ENCODE measurements at regions of chr17 and their contacts with region 1.

Region 1: DNA sequence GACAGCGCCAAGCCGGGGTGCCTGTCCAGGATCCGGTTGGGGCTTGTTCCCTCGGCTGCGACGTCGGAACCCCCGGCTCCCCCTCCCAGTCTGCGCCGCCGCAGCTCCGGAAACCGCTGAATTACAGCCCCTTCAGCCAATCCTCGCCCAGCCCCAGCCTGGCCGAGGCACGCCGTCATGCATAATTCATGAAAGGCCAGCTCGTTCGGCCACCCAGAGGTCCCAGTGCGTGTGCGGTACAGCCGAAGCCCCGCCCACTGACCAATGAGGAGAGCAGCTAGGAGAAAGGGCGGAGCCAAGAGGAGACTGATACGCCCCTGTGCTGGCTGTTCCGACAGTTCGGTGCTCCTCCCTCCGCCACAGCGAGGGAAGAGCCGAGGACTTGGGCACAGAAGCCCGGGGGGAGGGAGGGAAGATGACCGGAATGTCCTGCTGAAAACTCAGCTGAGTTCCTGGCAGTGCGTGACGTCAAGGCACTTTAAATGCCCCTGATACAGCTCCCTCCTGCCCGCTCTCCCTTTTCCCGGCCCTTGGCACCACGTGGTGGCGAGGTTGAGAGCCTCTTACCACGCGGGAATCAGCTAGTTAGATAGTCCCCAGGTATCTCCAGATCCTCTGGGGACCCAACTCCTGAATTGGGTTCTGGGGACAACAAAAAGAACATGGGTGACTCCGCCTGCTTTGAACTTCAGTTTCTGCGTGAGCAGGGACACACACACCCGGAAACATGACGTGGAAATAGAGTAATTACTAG is at the start of gene STAT3:
- DNase-seq: peak; percentile 99 to 100 (median 100)
- ATAC-seq: peak; percentile 86
- H3K4me3 ChIP-seq: peak within 1 kb of the TSS; percentile 61 to 86
- H3K4me3 Mint-ChIP-seq: peak within 1 kb of the TSS; percentile 99
- H3K27ac ChIP-seq: peak within 1 kb of the TSS; percentile 99
- H3K27ac Mint-ChIP-seq: peak within 1 kb of the TSS; percentile 100
- H3K4me1 ChIP-seq: peaks cover 29% of the 10 kb centered on the region
- H3K4me1 Mint-ChIP-seq: peaks cover 47% of the 10 kb centered on the region
- H3K27me3 ChIP-seq: no peaks in the 10 kb centered on the region
- H3K27me3 Mint-ChIP-seq: no peaks in the 10 kb centered on the region
- CTCF ChIP-seq: no peak
- total RNA-seq, gene STAT3: 338 to 343 TPM

Region 2: GRCh38 chr17:42019509-42020404 is 368.8 kb before region 1 on chr17 and contains the start of gene NKIRAS2:
- CTCF ChIA-PET with region 1: no interaction called
- POLR2A ChIA-PET with region 1: interaction called, 11 read pairs
- intact Hi-C with region 1: loop called in 1 of 2 experiments (anchors 5 kb)
- DNase-seq: peak; percentile 82 to 94 (median 94)
- ATAC-seq: peak; percentile 80
- H3K4me3 ChIP-seq: peak within 1 kb of the TSS; percentile 69 to 83
- H3K4me3 Mint-ChIP-seq: peak within 1 kb of the TSS; percentile 97
- H3K27ac ChIP-seq: peak within 1 kb of the TSS; percentile 34 to 76
- H3K27ac Mint-ChIP-seq: peak within 1 kb of the TSS; percentile 87
- H3K4me1 ChIP-seq: peaks cover 48% of the 10 kb centered on the region
- H3K4me1 Mint-ChIP-seq: peaks cover 62% of the 10 kb centered on the region
- H3K27me3 ChIP-seq: no peaks in the 10 kb centered on the region
- H3K27me3 Mint-ChIP-seq: no peaks in the 10 kb centered on the region
- CTCF ChIP-seq: peak; percentile 91
- total RNA-seq, gene NKIRAS2: 13.2 to 14.8 TPM

Region 3: DNA sequence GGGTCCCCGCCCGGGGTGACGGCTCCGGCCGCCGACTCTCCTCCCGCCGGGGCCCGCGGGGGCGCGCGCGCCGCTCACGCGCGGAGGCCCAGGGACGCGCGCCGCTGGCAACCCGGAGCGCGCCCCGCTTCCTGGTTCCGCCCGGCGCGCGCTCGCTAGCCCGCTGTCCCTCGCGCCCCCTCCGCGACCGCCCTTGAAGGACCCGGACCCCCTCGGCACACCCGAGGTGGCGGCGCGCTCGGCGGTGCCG is 112.3 kb before region 1 on chr17 and contains the start of gene STAT5B:
- CTCF ChIA-PET with region 1: no interaction called
- POLR2A ChIA-PET with region 1: interaction called, 6 read pairs
- intact Hi-C with region 1: loop called in 1 of 2 experiments (anchors 1 kb)
- DNase-seq: peak; percentile 30 to 89 (median 66)
- ATAC-seq: peak; percentile 33
- H3K4me3 ChIP-seq: peak within 1 kb of the TSS; percentile 72 to 84
- H3K4me3 Mint-ChIP-seq: peak within 1 kb of the TSS; percentile 96
- H3K27ac ChIP-seq: peak within 1 kb of the TSS; percentile 77 to 83
- H3K27ac Mint-ChIP-seq: peak within 1 kb of the TSS; percentile 98
- H3K4me1 ChIP-seq: peaks cover 48% of the 10 kb centered on the region
- H3K4me1 Mint-ChIP-seq: peaks cover 52% of the 10 kb centered on the region
- H3K27me3 ChIP-seq: no peaks in the 10 kb centered on the region
- H3K27me3 Mint-ChIP-seq: no peaks in the 10 kb centered on the region
- CTCF ChIP-seq: no peak
- total RNA-seq, gene STAT5B: 85.2 to 85.5 TPM

Region 4: GRCh38 chr17:42322382-42323267 is 65.9 kb before region 1 on chr17:
- CTCF ChIA-PET with region 1: interaction called, 672 read pairs
- POLR2A ChIA-PET with region 1: interaction called, 8 read pairs
- intact Hi-C with region 1: loop called (anchors 1 to 5 kb)
- DNase-seq: peak; percentile 89 to 98 (median 96)
- ATAC-seq: peak; percentile 97
- H3K4me3 ChIP-seq: no peak overlapping the region
- H3K4me3 Mint-ChIP-seq: no peak overlapping the region
- H3K27ac ChIP-seq: peak overlapping the region in 1 of 2 experiments; percentile 38
- H3K27ac Mint-ChIP-seq: peak overlapping the region; percentile 82
- H3K4me1 ChIP-seq: peaks cover 17% of the 10 kb centered on the region
- H3K4me1 Mint-ChIP-seq: peaks cover 40% of the 10 kb centered on the region
- H3K27me3 ChIP-seq: no peaks in the 10 kb centered on the region
- H3K27me3 Mint-ChIP-seq: no peaks in the 10 kb centered on the region
- CTCF ChIP-seq: peak; percentile 99

Region 5: DNA sequence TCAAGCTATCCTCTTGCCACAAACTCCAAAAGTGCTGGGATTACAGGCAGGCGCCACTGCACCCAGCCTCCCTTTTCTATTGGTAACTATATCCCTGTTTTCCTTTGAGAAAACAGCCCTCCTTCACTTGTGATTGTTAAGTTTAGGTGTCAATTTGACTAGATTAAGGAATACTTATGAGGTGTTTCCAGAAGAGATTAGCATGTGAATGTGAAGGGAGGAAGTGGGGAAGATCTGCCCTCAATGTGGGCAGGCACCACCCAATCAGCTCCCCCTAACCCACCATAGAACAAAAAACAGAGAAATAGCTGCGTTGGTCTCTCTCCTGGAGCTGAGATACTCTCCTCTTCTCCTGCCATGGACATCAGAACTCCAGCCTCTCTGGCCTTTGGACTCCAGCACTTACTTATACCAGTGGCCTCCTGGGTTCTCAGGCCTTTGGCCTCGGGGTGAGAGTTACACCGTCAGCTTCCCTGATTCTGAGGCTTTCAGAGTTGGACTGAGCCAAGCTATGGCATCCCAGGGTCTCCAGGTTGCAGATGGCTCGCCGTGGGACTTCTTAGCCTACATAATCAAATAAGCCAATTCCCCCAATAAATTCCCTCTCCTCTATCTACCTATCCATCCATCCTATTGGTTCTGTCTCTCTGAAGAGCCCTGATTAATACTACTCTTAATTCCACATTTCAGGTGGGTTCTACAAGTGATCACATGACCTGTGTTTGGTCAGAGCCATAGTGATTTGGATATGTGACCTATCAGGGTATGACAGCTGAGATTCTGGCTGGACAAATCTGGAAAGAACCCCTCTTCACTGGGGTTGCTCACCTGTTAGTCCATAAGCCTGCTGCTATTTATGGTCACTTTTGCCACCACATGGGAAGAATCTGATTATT is 11.6 kb after region 1 on chr17:
- CTCF ChIA-PET with region 1: interaction called, 28 read pairs
- POLR2A ChIA-PET with region 1: interaction called, 28 read pairs
- intact Hi-C with region 1: no loop called
- DNase-seq: peak in 1 of 9 experiments; percentile 40
- ATAC-seq: peak; percentile 46
- H3K4me3 ChIP-seq: peak overlapping the region in 1 of 2 experiments; percentile 30
- H3K4me3 Mint-ChIP-seq: peak overlapping the region; percentile 39
- H3K27ac ChIP-seq: no peak overlapping the region
- H3K27ac Mint-ChIP-seq: peak overlapping the region; percentile 62
- H3K4me1 ChIP-seq: peaks cover 20% of the 10 kb centered on the region
- H3K4me1 Mint-ChIP-seq: peaks cover 10% of the 10 kb centered on the region
- H3K27me3 ChIP-seq: no peaks in the 10 kb centered on the region
- H3K27me3 Mint-ChIP-seq: no peaks in the 10 kb centered on the region
- CTCF ChIP-seq: no peak

Region 6: DNA sequence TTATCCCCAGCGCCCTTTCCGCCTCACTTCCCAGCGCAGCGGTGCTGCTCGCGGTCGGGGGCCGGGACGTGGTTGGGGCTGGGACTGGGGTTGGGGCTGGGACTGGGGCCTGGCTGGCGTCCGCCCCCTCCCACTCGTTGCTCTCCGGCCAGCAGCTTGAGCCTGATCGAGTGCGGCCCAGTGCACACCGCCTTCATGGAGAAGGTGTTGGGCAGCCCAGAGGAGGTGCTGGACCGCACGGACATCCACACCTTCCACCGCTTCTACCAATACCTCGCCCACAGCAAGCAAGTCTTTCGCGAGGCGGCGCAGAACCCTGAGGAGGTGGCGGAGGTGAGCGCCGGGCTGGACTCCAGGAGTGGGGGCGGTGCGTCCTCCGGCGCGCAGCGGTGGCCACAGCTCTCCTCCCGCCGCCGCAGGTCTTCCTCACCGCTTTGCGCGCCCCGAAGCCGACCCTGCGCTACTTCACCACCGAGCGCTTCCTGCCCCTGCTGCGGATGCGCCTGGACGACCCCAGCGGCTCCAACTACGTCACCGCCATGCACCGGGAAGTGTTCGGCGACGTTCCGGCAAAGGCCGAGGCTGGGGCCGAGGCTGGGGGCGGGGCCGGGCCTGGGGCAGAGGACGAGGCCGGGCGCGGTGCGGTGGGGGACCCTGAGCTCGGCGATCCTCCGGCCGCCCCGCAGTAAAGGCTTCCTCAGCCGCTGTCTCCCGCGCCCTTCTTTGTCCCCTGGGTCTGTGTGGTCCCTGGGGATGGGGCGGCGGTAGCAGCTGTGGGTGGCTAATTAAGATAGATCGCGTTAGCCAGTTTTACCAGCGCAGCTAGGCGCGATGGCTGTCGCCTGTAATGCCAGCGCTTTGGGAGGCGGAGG is 165.9 kb after region 1 on chr17:
- CTCF ChIA-PET with region 1: no interaction called
- POLR2A ChIA-PET with region 1: interaction called, 10 read pairs
- intact Hi-C with region 1: no loop called
- DNase-seq: peak; percentile 38 to 91 (median 78)
- ATAC-seq: peak; percentile 88
- H3K4me3 ChIP-seq: peak overlapping the region; percentile 70 to 87
- H3K4me3 Mint-ChIP-seq: peak overlapping the region; percentile 89
- H3K27ac ChIP-seq: peak overlapping the region; percentile 74 to 80
- H3K27ac Mint-ChIP-seq: peak overlapping the region; percentile 94
- H3K4me1 ChIP-seq: peaks cover 12% of the 10 kb centered on the region
- H3K4me1 Mint-ChIP-seq: peaks cover 29% of the 10 kb centered on the region
- H3K27me3 ChIP-seq: no peaks in the 10 kb centered on the region
- H3K27me3 Mint-ChIP-seq: no peaks in the 10 kb centered on the region
- CTCF ChIP-seq: no peak

Measured in CD8-positive, alpha-beta T cell (primary cell).